H1 (cell line): ENCODE measurements at regions of chr3 and their contacts with region 1.

Region 1: DNA sequence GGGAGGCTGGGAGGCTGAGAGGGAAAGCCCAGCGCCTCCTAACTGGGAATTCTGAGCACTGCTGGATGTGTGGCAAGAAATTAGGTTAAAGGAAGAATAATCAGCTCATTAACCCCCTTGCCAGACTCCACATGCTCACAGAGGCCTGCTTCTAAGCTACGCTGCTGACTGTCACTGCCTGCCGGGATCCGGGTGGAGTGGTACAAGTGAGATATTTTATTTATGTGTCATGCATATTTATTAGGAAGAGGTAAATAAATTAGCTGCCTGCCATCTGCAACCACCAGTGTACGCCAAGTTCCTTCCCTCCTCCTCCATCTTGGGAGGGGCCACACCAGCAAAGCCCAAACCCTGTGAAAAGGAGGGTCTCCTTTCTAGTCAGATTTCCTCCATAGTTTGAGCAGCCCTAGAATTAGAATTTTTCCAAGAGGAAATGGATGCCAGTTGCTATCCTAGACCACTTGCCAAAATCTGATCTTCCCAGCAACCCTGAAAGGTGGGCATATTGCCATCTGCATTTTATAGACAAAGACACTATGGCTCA is 43.5 kb upstream of the GRIP2 start:
- DNase-seq: no peak
- H3K4me3 ChIP-seq: no peak overlapping the region
- H3K27ac ChIP-seq: no peak overlapping the region
- H3K4me1 ChIP-seq: no peaks in the 10 kb centered on the region
- H3K27me3 ChIP-seq: no peaks in the 10 kb centered on the region
- CTCF ChIP-seq: no peak
- EP300 ChIP-seq: no peak
- POLR2A ChIP-seq: no peak
- RAD21 ChIP-seq: no peak

Region 2: DNA sequence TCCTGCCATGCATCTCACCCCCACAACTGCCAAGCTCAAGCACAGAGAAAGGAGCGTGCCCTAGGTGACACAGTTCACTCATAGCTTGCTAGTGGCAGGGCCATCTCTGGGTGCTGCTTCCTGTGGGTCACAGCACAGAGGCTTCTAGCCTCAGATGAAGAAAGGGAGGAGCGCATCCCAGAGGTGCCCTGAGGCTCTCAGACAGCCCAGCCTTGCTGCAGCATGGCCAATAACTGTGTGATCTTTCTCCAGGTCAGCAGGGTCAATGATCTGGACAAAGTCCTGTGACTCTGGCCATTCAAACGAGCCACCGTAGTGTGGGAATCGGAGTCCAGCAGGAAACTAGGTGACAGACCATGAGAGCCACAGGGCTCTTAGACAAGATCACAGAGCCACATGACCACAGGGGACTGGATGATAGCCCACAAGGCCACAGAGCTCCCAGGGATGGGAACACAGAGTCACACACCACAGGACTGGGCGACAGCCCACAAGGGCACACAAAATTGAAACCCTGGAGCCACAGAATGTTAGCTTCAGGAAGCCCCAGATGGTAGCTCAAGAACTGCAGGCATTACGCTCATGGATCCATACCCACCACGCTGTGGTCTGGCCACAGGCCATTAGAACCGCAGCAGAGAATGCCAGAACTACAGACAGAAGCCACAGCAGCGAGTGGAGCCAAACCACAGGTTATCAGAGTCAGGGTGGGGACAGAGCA is 17.6 kb before region 1 on chr3:
- CTCF ChIA-PET with region 1: interaction called, 11 read pairs
- POLR2A ChIA-PET with region 1: no interaction called
- DNase-seq: no peak
- H3K4me3 ChIP-seq: no peak overlapping the region
- H3K27ac ChIP-seq: no peak overlapping the region
- H3K4me1 ChIP-seq: peaks cover 6 to 27% (median 10%) of the 10 kb centered on the region in 4 experiments
- H3K27me3 ChIP-seq: no peaks in the 10 kb centered on the region
- CTCF ChIP-seq: no peak
- EP300 ChIP-seq: no peak
- POLR2A ChIP-seq: no peak
- RAD21 ChIP-seq: no peak

Region 3: DNA sequence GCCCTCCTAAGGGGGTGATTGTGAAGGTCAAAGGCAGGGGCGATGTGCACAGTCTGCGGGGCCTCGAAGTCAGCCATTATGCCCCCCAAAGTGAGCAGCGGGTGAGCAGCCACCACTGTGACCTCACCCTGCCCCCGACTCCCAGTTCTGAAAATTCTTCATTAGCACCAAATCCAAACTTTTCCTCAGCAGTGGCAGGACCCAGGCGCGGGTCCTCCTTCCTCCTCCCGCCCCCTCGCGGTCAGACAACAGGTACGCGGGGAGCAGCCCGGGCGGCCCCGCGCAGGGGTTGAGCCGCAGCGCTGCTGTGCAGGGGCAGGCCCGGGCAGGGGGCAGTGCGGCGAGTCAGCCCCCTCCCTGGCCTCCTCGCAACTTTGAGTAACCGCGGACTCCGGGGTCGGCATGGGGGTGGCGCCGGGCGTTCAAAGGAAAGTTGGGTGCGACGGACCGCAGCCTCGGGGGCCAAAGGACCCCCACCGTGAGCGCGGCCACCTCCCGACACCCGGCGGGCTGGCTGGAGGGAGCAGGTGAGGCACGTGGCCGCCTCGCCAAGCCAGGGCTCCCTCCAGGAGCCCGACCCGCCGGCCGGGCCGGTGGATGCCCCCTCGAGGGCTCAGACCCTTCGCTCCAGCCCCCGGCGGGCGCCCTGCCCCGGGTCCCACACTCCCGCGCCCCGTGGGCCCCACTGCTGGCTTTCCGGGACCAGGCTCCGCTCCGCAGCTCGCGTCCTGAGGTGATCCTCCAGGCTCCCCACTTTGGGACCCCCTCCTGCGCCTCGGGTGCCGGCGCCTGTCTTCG is 18.6 kb after region 1 on chr3:
- CTCF ChIA-PET with region 1: interaction called, 10 read pairs
- POLR2A ChIA-PET with region 1: no interaction called
- DNase-seq: peak in 1 of 2 experiments; percentile 67
- H3K4me3 ChIP-seq: peak overlapping the region; percentile 45 to 73 (median 52)
- H3K27ac ChIP-seq: no peak overlapping the region
- H3K4me1 ChIP-seq: peaks cover 0 to 12% (median 9%) of the 10 kb centered on the region in 4 experiments; a peak in 6 of 7 replicates
- H3K27me3 ChIP-seq: peaks cover 0 to 14% (median 10%) of the 10 kb centered on the region in 4 experiments; a peak in 5 of 7 replicates
- CTCF ChIP-seq: peak; percentile 38 to 43 (median 41)
- EP300 ChIP-seq: no peak
- POLR2A ChIP-seq: no peak
- RAD21 ChIP-seq: peak in 1 of 2 experiments; percentile 21; a peak in 1 of 4 replicates

Region 4: DNA sequence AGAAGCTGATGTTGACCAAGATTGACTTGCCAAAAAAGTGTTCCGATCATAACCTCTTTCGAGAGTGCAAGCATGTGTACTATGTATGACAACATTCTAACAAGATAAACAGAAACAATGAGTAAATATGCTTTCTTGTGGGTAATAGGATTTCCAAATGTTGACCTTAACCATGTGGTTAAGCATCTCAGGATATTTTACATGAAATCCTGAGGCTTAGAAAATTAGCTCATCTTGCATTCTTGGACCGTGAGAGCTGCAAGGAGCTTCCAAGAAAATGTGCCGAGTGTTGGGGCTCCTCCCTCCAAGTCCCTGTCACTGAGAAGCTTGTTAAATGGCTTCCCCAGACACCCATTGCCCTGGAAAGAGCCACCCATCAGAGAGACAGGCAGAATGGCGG is 141.4 kb after region 1 on chr3:
- CTCF ChIA-PET with region 1: no interaction called
- POLR2A ChIA-PET with region 1: no interaction called
- DNase-seq: no peak
- H3K4me3 ChIP-seq: no peak overlapping the region
- H3K27ac ChIP-seq: no peak overlapping the region
- H3K4me1 ChIP-seq: no peaks in the 10 kb centered on the region
- H3K27me3 ChIP-seq: no peaks in the 10 kb centered on the region
- CTCF ChIP-seq: no peak
- EP300 ChIP-seq: no peak
- POLR2A ChIP-seq: no peak
- RAD21 ChIP-seq: no peak